IMR-90 (cell line): ENCODE measurements at regions of chr4 and their contacts with region 1.

Region 1: DNA sequence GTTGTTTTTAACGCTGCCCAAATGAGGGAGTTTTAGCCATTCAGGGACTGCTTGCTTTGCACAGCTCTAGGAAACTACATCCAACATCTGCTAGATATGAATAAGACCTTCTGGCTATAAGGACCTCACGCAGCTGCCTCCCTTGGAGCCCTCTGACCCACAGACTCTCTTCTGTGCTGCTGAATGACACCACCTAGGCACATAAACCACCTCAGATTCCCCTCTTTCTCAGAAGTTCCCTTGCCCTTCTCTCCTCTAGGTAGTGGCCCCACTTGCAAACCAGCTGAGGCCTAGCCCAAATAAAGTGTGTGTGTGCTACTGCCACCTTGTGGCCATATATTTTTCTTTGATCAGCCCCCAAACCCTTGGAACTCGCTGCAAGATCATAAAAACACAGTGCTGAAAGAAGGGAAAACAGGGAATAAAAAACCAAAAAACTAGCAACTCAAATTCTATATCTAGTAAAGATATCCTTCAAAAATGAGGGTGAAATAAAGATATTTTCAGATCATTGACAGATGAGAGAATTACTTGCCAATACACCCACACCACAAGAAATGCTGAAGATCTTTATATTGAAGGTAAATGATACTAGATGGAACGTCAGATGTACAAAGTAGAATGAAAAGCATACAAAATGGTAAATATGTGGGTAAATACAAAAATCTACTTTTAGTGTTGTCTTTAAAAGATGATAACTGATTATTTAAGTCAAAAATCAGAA is 265.9 kb downstream of the ADAMTS3 start:
- DNase-seq: peak; percentile 35
- ATAC-seq: peak; percentile 85
- H3K4me3 ChIP-seq: no peak overlapping the region
- H3K27ac ChIP-seq: no peak overlapping the region
- H3K4me1 ChIP-seq: no peaks in the 10 kb centered on the region
- H3K27me3 ChIP-seq: no peaks in the 10 kb centered on the region
- CTCF ChIP-seq: peak; percentile 61
- POLR2A ChIP-seq: no peak
- RAD21 ChIP-seq: peak; percentile 38

Region 2: GRCh38 chr4:73036123-73036522 is 733.0 kb after region 1 on chr4:
- CTCF ChIA-PET with region 1: no interaction called
- POLR2A ChIA-PET with region 1: no interaction called
- dilution Hi-C with region 1: no loop called
- in situ Hi-C with region 1: loop called (anchors 25 kb)
- intact Hi-C with region 1: no loop called
- DNase-seq: no peak
- ATAC-seq: no peak
- H3K4me3 ChIP-seq: no peak overlapping the region
- H3K27ac ChIP-seq: no peak overlapping the region
- H3K4me1 ChIP-seq: no peaks in the 10 kb centered on the region
- H3K27me3 ChIP-seq: no peaks in the 10 kb centered on the region; the same call in 1 of the 2 replicates
- CTCF ChIP-seq: no peak
- POLR2A ChIP-seq: no peak
- RAD21 ChIP-seq: no peak